Right cardiac atrium (tissue), 5 donors: ENCODE measurements at regions of chr16 and their contacts with region 1.

Region 1: DNA sequence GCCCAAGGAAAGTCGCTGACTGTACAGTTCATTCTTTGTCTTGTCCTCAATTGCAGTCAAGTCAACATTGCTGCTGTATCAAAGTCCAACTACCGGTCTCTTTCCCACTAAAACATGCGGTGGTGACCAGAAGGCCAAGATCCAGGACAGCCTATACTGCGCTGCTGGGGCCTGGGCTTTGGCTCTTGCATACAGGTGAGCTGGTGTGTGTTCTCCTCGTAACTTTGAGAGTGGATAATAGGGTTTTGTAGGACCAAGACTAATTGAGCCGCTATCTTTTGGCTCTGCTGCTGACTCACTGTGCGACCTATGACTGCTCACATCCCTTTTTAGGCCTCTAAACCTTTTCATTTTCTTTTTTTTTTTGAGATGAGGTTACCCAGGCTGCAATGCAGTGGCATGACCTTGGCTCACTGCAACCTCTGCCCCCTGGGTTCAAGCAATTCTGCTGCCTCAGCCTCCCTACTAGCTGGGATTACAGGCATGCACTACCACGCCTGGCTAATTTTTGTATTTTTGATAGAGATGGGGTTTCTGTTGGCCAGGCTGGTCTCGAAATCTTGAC is 38.7 kb downstream of the PHKB start:
- DNase-seq: no peak
- ATAC-seq: no peak
- H3K4me3 ChIP-seq: no peak overlapping the region
- H3K27ac ChIP-seq: no peak overlapping the region
- H3K4me1 ChIP-seq: no peaks in the 10 kb centered on the region
- H3K27me3 ChIP-seq: no peaks in the 10 kb centered on the region

Region 2: DNA sequence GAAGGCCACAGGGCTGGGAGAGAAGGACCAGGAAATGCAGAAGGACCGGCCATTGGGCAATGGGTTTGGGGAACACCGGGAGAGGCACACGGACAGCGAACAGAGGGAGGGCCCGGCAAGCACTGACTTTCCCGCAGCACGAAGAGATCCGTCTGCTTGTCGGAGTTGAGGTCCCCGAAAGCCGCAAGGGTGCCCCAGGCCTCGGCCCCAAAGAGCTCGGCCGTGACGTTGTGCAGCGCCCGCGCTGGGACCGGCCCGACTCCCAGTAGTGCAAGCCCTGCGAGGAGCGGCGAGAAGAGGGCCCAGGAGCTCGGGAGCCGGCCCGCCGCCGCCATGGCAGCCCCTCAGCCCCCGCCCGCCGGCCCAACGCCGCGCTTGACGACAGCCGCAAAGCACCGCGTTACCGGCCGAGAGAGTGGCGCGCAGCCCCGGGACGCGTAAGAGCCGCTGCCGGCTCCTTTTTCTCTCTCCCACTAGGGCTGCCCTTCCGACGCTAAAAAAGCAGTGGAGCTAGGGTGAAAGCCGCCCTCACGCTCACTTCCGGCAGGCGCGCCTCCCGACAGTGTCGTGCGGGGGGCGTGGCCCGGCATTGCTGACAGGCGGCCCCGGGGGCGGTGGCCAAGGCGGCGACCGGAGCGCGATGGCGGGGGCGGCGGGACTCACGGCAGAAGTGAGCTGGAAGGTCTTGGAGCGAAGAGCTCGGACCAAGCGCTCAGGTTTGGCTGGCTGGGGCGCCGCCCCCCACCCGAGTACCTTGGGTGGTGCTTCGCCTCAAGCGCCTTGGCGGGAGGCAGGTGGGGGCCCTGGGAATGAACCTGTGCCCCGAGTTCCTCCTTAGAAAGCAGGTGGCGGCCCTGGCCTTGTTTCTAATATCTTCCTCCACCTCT is 38.8 kb before region 1 on chr16 and contains the starts of genes ITFG1 and PHKB:
- intact Hi-C with region 1: loop called in 1 of 4 experiments (anchors 5 kb)
- DNase-seq: peak; percentile 94 to 98 (median 97)
- ATAC-seq: peak; percentile 97 to 98
- H3K4me3 ChIP-seq: peak within 1 kb of the TSS; percentile 95
- H3K27ac ChIP-seq: peak within 1 kb of the TSS; percentile 98
- H3K4me1 ChIP-seq: peaks cover 5% of the 10 kb centered on the region
- H3K27me3 ChIP-seq: no peaks in the 10 kb centered on the region
- total RNA-seq, gene ITFG1: 61.6 to 72.6 (median 64.5) TPM
- total RNA-seq, gene PHKB: 62.2 to 68.0 (median 63.5) TPM